CD4-positive, alpha-beta memory T cell (primary cell): ENCODE measurements at regions of chr12 and their contacts with region 1.

Region 1: DNA sequence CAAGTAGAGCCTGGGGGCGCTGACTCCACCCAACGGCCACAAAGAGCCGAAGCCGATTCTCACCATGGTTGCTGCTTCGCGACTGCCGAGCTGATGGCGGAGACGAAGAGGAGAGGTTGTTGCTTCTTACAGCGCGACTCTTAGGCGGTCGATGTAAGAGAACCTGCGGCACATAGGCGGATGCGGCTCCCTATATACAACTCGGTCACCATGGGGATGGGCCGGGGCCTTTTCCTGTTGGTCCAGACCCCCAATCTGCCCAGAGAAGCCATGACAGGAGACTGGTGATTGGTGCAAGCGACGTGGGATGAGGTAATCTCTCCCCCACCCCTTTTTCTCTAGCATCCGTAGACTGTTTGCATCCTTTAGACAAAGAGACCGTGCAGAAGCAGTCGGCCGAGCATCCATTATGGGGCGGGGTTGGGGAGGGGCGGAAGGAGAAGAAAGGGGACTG is at the start of gene TUBA1A:
- DNase-seq: peak; percentile 96 to 99 (median 98)
- H3K4me3 ChIP-seq: peak within 1 kb of the TSS; percentile 84 to 97
- H3K4me3 Mint-ChIP-seq: peak within 1 kb of the TSS; percentile 95 to 99 (median 98)
- H3K27ac ChIP-seq: peak within 1 kb of the TSS; percentile 95
- H3K27ac Mint-ChIP-seq: peak within 1 kb of the TSS; percentile 96 to 100 (median 99)
- H3K4me1 ChIP-seq: peaks cover 17% of the 10 kb centered on the region
- H3K4me1 Mint-ChIP-seq: peaks cover 12 to 35% (median 25%) of the 10 kb centered on the region in 4 donors
- H3K27me3 ChIP-seq: no peaks in the 10 kb centered on the region
- H3K27me3 Mint-ChIP-seq: no peaks in the 10 kb centered on the region
- total RNA-seq, gene TUBA1A: 97.5 to 102 TPM

Region 2: GRCh38 chr12:49018261-49019119 is 170.5 kb before region 1 on chr12 and contains the start of gene PRKAG1:
- CTCF ChIA-PET with region 1: no interaction called
- POLR2A ChIA-PET with region 1: no interaction called
- intact Hi-C with region 1: loop called (anchors 1 kb)
- DNase-seq: peak; percentile 97 to 98 (median 98)
- H3K4me3 ChIP-seq: peak within 1 kb of the TSS; percentile 94 to 96
- H3K4me3 Mint-ChIP-seq: peak within 1 kb of the TSS; percentile 87 to 99 (median 94)
- H3K27ac ChIP-seq: peak within 1 kb of the TSS; percentile 95
- H3K27ac Mint-ChIP-seq: peak within 1 kb of the TSS; percentile 95 to 100 (median 99)
- H3K4me1 ChIP-seq: peaks cover 24% of the 10 kb centered on the region
- H3K4me1 Mint-ChIP-seq: peaks cover 18 to 51% (median 37%) of the 10 kb centered on the region in 4 donors
- H3K27me3 ChIP-seq: no peaks in the 10 kb centered on the region
- H3K27me3 Mint-ChIP-seq: no peaks in the 10 kb centered on the region
- total RNA-seq, gene PRKAG1: 48.9 to 53.7 TPM

Region 3: GRCh38 chr12:49069507-49070346 is 119.2 kb before region 1 on chr12 and contains the start of gene RHEBL1:
- CTCF ChIA-PET with region 1: interaction called, 5 read pairs
- POLR2A ChIA-PET with region 1: interaction called, 26 read pairs
- intact Hi-C with region 1: no loop called
- DNase-seq: peak; percentile 96 to 98 (median 97)
- H3K4me3 ChIP-seq: peak within 1 kb of the TSS; percentile 69 to 77
- H3K4me3 Mint-ChIP-seq: peak within 1 kb of the TSS; percentile 92 to 99 (median 94)
- H3K27ac ChIP-seq: peak within 1 kb of the TSS; percentile 71
- H3K27ac Mint-ChIP-seq: peak within 1 kb of the TSS; percentile 87 to 98 (median 94)
- H3K4me1 ChIP-seq: peaks cover 13% of the 10 kb centered on the region
- H3K4me1 Mint-ChIP-seq: peaks cover 8 to 18% (median 15%) of the 10 kb centered on the region in 4 donors
- H3K27me3 ChIP-seq: no peaks in the 10 kb centered on the region
- H3K27me3 Mint-ChIP-seq: no peaks in the 10 kb centered on the region
- total RNA-seq, gene RHEBL1: 2.7 to 2.9 TPM

Region 4: GRCh38 chr12:49110464-49111155 is 78.3 kb before region 1 on chr12 and contains the start of gene LMBR1L:
- CTCF ChIA-PET with region 1: interaction called, 4 read pairs
- POLR2A ChIA-PET with region 1: interaction called, 62 read pairs
- intact Hi-C with region 1: loop called (anchors 1 kb)
- DNase-seq: peak; percentile 94 to 99 (median 97)
- H3K4me3 ChIP-seq: peak within 1 kb of the TSS; percentile 73 to 92
- H3K4me3 Mint-ChIP-seq: peak within 1 kb of the TSS; percentile 91 to 99 (median 98)
- H3K27ac ChIP-seq: peak within 1 kb of the TSS; percentile 88
- H3K27ac Mint-ChIP-seq: peak within 1 kb of the TSS; percentile 94 to 99 (median 98)
- H3K4me1 ChIP-seq: peaks cover 22% of the 10 kb centered on the region
- H3K4me1 Mint-ChIP-seq: peaks cover 25 to 48% (median 35%) of the 10 kb centered on the region in 4 donors
- H3K27me3 ChIP-seq: no peaks in the 10 kb centered on the region
- H3K27me3 Mint-ChIP-seq: no peaks in the 10 kb centered on the region
- total RNA-seq, gene LMBR1L: 222 to 226 TPM

Region 5: DNA sequence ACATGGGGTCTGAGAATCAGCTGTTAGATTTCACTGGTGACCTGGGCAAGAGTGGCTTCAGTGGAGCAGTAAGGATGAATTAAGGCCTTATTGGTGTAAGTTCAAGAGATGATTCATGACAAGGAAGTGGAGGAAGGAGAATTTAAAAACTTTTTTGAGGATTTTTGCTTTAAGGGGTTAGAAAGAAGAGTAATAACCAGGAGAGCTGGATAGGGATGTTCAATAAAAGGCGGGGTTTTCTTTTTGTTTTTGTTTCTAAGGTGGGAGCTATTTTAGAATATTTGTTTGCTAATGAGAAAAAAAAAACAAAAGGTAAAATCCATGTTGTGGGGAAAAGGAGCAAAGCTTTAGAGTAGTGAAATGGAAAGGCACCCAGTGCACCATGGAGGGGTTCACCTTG is 42.5 kb before region 1 on chr12:
- CTCF ChIA-PET with region 1: no interaction called
- POLR2A ChIA-PET with region 1: no interaction called
- intact Hi-C with region 1: no loop called
- DNase-seq: no peak
- H3K4me3 ChIP-seq: no peak overlapping the region
- H3K4me3 Mint-ChIP-seq: no peak overlapping the region
- H3K27ac ChIP-seq: no peak overlapping the region
- H3K27ac Mint-ChIP-seq: no peak overlapping the region
- H3K4me1 ChIP-seq: no peaks in the 10 kb centered on the region
- H3K4me1 Mint-ChIP-seq: peaks cover 0 to 3% (median 0%) of the 10 kb centered on the region in 4 donors
- H3K27me3 ChIP-seq: no peaks in the 10 kb centered on the region
- H3K27me3 Mint-ChIP-seq: no peaks in the 10 kb centered on the region

Region 6: GRCh38 chr12:49223590-49224369 is 34.8 kb after region 1 on chr12:
- CTCF ChIA-PET with region 1: interaction called, 3 read pairs
- POLR2A ChIA-PET with region 1: interaction called, 12 read pairs
- intact Hi-C with region 1: no loop called
- DNase-seq: no peak
- H3K4me3 ChIP-seq: no peak overlapping the region
- H3K4me3 Mint-ChIP-seq: no peak overlapping the region
- H3K27ac ChIP-seq: no peak overlapping the region
- H3K27ac Mint-ChIP-seq: peak overlapping the region in 1 of 7 donors; percentile 4
- H3K4me1 ChIP-seq: no peaks in the 10 kb centered on the region
- H3K4me1 Mint-ChIP-seq: no peaks in the 10 kb centered on the region
- H3K27me3 ChIP-seq: no peaks in the 10 kb centered on the region
- H3K27me3 Mint-ChIP-seq: no peaks in the 10 kb centered on the region

Region 7: DNA sequence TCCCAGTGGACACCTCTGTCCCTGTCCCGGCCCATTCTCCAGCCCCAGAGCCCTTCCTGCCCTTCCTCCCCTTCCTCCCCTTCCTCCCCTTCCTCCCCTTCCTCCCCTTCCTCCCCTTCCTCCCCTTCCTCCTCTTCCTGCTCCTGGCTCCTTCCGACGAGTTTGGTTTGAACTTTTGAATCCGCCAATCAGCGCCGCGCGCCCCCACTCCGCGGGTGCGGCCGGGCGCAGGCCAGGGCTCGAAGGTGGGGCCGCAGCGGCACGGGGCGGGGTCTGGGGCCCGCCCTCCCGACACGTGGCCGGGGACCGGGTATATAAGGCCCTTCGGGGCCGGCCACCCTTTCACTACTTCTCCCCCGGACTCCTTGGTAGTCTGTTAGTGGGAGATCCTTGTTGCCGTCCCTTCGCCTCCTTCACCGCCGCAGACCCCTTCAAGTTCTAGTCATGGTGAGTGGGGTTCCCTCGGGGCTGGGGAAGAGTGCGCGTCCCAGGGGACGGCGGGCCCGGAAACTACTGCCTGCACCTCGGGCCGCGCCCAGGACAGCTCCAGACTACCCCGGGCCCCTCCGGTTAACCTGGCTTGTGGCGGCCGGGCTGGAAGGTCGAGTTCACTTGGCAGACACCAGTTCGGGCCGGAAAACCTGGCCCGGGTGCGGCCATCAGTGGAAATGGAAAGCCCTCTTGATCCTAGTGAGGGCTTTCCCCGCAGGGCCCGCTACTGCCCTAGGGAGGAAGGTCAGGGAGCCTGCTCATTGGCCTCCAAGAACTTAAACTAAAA is 76.0 kb after region 1 on chr12 and contains the start of gene TUBA1C:
- CTCF ChIA-PET with region 1: no interaction called
- POLR2A ChIA-PET with region 1: interaction called, 41 read pairs
- intact Hi-C with region 1: loop called (anchors 2 kb)
- DNase-seq: peak; percentile 80 to 84 (median 82)
- H3K4me3 ChIP-seq: peak within 1 kb of the TSS; percentile 65 to 96
- H3K4me3 Mint-ChIP-seq: peak within 1 kb of the TSS; percentile 90 to 99 (median 96)
- H3K27ac ChIP-seq: peak within 1 kb of the TSS; percentile 74
- H3K27ac Mint-ChIP-seq: peak within 1 kb of the TSS; percentile 92 to 98 (median 94)
- H3K4me1 ChIP-seq: peaks cover 36% of the 10 kb centered on the region
- H3K4me1 Mint-ChIP-seq: peaks cover 8 to 42% (median 23%) of the 10 kb centered on the region in 4 donors
- H3K27me3 ChIP-seq: no peaks in the 10 kb centered on the region
- H3K27me3 Mint-ChIP-seq: no peaks in the 10 kb centered on the region
- total RNA-seq, gene TUBA1C: 50.6 to 51.2 TPM